Activated naive CD4-positive, alpha-beta T cell treated with anti-CD3 and anti-CD28 coated beads for 36 hours (primary cell): ENCODE measurements at regions of chr7 and their contacts with region 1.

Region 1: GRCh38 chr7:131124001-131124629 is 203.6 kb upstream of the MKLN1 start:
- DNase-seq: no peak
- H3K4me3 Mint-ChIP-seq: no peak overlapping the region
- H3K27ac Mint-ChIP-seq: no peak overlapping the region
- H3K4me1 Mint-ChIP-seq: no peaks in the 10 kb centered on the region
- H3K27me3 Mint-ChIP-seq: no peaks in the 10 kb centered on the region

Region 2: DNA sequence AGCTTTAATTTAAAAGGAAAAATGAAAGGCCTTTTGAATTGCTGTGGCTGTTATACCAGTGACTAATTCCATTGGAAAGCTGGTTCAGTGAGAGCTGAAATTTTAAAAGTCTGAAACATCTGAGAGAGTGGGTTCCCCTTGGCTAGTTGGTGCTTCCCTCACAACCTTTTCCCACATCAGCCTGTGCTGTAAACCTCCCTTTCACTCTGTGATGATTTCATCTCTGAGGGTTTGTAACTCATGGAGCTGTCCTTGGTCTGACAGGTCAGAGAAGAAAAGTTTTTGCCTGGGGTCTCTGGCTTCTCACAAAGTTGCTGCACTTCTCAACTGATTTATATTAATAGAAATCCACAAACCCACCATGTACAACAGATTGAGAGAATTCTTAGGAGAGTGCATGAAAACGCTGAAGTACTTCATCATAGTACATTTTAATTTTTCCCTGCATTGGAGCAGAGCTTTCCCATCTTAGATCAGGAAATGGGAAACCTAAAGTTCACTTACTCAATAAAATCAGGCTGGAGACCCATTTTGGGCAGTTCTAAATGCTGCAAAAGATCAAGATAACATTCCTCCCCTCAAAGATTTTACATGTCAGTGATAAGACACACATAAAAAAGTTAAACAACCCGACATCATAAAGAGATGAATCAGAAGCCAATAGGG is 46.5 kb after region 1 on chr7:
- CTCF ChIA-PET with region 1: no interaction called
- intact Hi-C with region 1: no loop called
- DNase-seq: no peak
- H3K4me3 Mint-ChIP-seq: no peak overlapping the region
- H3K27ac Mint-ChIP-seq: no peak overlapping the region
- H3K4me1 Mint-ChIP-seq: no peaks in the 10 kb centered on the region
- H3K27me3 Mint-ChIP-seq: no peaks in the 10 kb centered on the region

Region 3: DNA sequence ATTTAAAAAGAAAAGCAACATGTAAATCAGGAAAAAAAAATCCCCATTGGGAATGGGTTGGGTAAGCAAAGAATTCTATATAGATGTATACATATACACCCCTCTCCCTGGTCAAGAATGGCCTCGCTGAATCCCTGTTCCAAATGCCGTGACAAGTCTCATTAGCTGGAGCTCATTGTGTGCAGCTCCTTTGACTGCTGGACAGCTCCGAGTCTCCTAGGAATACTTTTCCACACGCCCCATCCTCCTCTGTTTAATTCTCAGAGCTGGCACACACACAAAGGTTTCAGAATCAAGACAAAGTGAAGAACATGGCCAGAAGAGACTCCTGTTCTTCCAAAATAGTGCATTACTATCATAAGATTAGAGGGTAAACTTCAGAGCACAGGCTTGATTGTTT is 72.7 kb after region 1 on chr7:
- CTCF ChIA-PET with region 1: no interaction called
- intact Hi-C with region 1: loop called (anchors 2 kb)
- DNase-seq: no peak
- H3K4me3 Mint-ChIP-seq: no peak overlapping the region
- H3K27ac Mint-ChIP-seq: no peak overlapping the region
- H3K4me1 Mint-ChIP-seq: peaks cover 3% of the 10 kb centered on the region
- H3K27me3 Mint-ChIP-seq: no peaks in the 10 kb centered on the region